MCF 10A (cell line): ENCODE measurements at regions of chr14 and their contacts with region 1.

Region 1: GRCh38 chr14:44803239-44803905 is 158.4 kb downstream of the KLHL28 start:
- DNase-seq: peak; percentile 66
- H3K4me3 Mint-ChIP-seq: no peak overlapping the region
- H3K27ac Mint-ChIP-seq: no peak overlapping the region
- H3K4me1 Mint-ChIP-seq: no peaks in the 10 kb centered on the region
- H3K27me3 Mint-ChIP-seq: no peaks in the 10 kb centered on the region
- CTCF ChIP-seq: peak; percentile 79

Region 2: GRCh38 chr14:43503590-43503907 is 1299.8 kb before region 1 on chr14:
- CTCF ChIA-PET with region 1: interaction called, 4 read pairs
- POLR2A ChIA-PET with region 1: no interaction called
- intact Hi-C with region 1: loop called (anchors 5 kb)
- DNase-seq: peak; percentile 21
- H3K4me3 Mint-ChIP-seq: no peak overlapping the region
- H3K27ac Mint-ChIP-seq: no peak overlapping the region
- H3K4me1 Mint-ChIP-seq: peaks cover 2% of the 10 kb centered on the region
- H3K27me3 Mint-ChIP-seq: no peaks in the 10 kb centered on the region
- CTCF ChIP-seq: peak; percentile 48

Region 3: GRCh38 chr14:44833376-44834060 is 30.1 kb after region 1 on chr14:
- CTCF ChIA-PET with region 1: no interaction called
- POLR2A ChIA-PET with region 1: no interaction called
- intact Hi-C with region 1: no loop called
- DNase-seq: peak; percentile 54
- H3K4me3 Mint-ChIP-seq: no peak overlapping the region
- H3K27ac Mint-ChIP-seq: no peak overlapping the region
- H3K4me1 Mint-ChIP-seq: peaks cover 9% of the 10 kb centered on the region
- H3K27me3 Mint-ChIP-seq: no peaks in the 10 kb centered on the region
- CTCF ChIP-seq: no peak

Region 4: DNA sequence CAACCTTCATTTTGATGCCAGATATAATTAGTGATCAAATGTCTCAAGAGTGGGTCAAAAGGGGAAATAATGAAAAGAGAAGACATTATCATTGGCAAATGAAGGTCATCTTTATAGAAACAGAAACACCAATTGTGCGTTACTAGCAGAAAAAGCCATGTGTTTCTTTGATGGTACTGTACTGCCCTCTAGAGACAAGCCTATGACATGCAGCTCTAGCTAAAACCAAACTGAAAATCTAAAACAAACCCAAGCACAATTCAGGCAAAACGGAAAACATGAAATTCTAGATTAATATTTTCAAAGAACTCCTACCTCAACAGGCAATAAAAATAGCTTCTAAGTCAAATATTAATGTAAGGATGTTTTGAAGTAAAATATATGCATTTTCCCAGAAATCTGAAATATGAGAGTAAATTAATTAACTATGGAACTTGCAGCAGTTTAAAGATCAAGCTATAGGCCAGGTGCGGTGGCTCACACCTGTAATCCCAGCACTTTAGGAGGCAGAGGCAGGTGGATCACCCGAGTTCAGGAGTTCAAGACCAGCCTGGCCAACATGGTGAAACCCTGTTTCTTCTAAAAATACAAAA is 43.0 kb after region 1 on chr14:
- CTCF ChIA-PET with region 1: interaction called, 3 read pairs
- POLR2A ChIA-PET with region 1: no interaction called
- intact Hi-C with region 1: loop called (anchors 1 kb)
- DNase-seq: peak; percentile 65
- H3K4me3 Mint-ChIP-seq: no peak overlapping the region
- H3K27ac Mint-ChIP-seq: no peak overlapping the region
- H3K4me1 Mint-ChIP-seq: no peaks in the 10 kb centered on the region
- H3K27me3 Mint-ChIP-seq: no peaks in the 10 kb centered on the region
- CTCF ChIP-seq: peak; percentile 76